ENCODE measurements at regions of chr11 and their contacts with region 1.

Region 1: GRCh38 chr11:60970369-60970774 is 1.1 kb upstream of the CD6 start:
- DNase-seq: peak; percentile 66 to 88 (median 83)
- ATAC-seq: peak; percentile 74
- H3K4me3 ChIP-seq: peak overlapping the region in 1 of 2 experiments; percentile 80
- H3K4me3 Mint-ChIP-seq: peak overlapping the region; percentile 96
- H3K27ac ChIP-seq: peak overlapping the region; percentile 85 to 90
- H3K27ac Mint-ChIP-seq: peak overlapping the region; percentile 97
- H3K4me1 ChIP-seq: peaks cover 16% of the 10 kb centered on the region
- H3K4me1 Mint-ChIP-seq: peaks cover 30% of the 10 kb centered on the region
- H3K27me3 ChIP-seq: no peaks in the 10 kb centered on the region
- H3K27me3 Mint-ChIP-seq: no peaks in the 10 kb centered on the region
- CTCF ChIP-seq: peak; percentile 92

Region 2: GRCh38 chr11:60831143-60831500 is 139.2 kb before region 1 on chr11:
- CTCF ChIA-PET with region 1: interaction called, 3 read pairs
- POLR2A ChIA-PET with region 1: no interaction called
- intact Hi-C with region 1: loop called in 1 of 2 experiments (anchors 1 kb)
- DNase-seq: peak; percentile 60 to 88 (median 83)
- ATAC-seq: peak; percentile 96
- H3K4me3 ChIP-seq: peak overlapping the region in 1 of 2 experiments; percentile 12
- H3K4me3 Mint-ChIP-seq: no peak overlapping the region
- H3K27ac ChIP-seq: no peak overlapping the region
- H3K27ac Mint-ChIP-seq: no peak overlapping the region
- H3K4me1 ChIP-seq: no peaks in the 10 kb centered on the region
- H3K4me1 Mint-ChIP-seq: no peaks in the 10 kb centered on the region
- H3K27me3 ChIP-seq: no peaks in the 10 kb centered on the region
- H3K27me3 Mint-ChIP-seq: peaks cover 6% of the 10 kb centered on the region
- CTCF ChIP-seq: peak; percentile 90

Region 3: DNA sequence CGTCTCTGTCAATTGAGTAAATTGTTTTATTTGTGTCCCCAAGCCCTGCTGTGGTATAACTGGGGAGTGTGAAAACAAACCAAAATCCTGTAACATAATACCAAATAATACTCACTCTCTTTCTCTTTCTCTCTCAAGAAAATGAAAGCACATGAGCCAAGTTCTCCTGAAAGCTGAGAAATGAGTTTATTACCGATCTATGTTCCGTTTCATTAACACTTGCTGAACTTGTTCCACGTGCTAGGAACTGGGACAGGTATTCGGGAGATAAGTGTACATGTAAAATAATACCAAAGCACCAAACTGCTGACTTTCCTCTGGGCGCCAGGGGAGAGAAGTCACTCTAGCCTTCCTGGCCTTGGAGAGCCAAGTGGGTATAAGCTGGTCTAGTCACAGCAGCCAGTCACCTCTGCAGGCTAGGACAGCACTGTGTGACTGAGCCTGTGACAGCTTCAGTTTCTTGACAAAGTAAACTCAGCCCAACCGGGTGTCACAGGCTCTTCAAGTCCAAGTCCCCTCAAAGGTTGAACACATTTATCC is 24.2 kb after region 1 on chr11:
- CTCF ChIA-PET with region 1: interaction called, 13 read pairs
- POLR2A ChIA-PET with region 1: interaction called, 4 read pairs
- intact Hi-C with region 1: no loop called
- DNase-seq: peak in 1 of 9 experiments; percentile 46
- ATAC-seq: peak; percentile 50
- H3K4me3 ChIP-seq: no peak overlapping the region
- H3K4me3 Mint-ChIP-seq: peak overlapping the region; percentile 42
- H3K27ac ChIP-seq: peak overlapping the region in 1 of 2 experiments; percentile 20
- H3K27ac Mint-ChIP-seq: peak overlapping the region; percentile 78
- H3K4me1 ChIP-seq: peaks cover 53% of the 10 kb centered on the region
- H3K4me1 Mint-ChIP-seq: peaks cover 73% of the 10 kb centered on the region
- H3K27me3 ChIP-seq: no peaks in the 10 kb centered on the region
- H3K27me3 Mint-ChIP-seq: no peaks in the 10 kb centered on the region
- CTCF ChIP-seq: no peak

Region 4: GRCh38 chr11:61028272-61028761 is 57.9 kb after region 1 on chr11:
- CTCF ChIA-PET with region 1: interaction called, 14 read pairs
- POLR2A ChIA-PET with region 1: interaction called, 5 read pairs
- intact Hi-C with region 1: loop called in 1 of 2 experiments (anchors 1 kb)
- DNase-seq: peak in 8 of 9 experiments; percentile 29 to 80 (median 72)
- ATAC-seq: peak; percentile 19
- H3K4me3 ChIP-seq: peak overlapping the region; percentile 21 to 38
- H3K4me3 Mint-ChIP-seq: peak overlapping the region; percentile 83
- H3K27ac ChIP-seq: peak overlapping the region; percentile 44 to 66
- H3K27ac Mint-ChIP-seq: peak overlapping the region; percentile 95
- H3K4me1 ChIP-seq: peaks cover 61% of the 10 kb centered on the region
- H3K4me1 Mint-ChIP-seq: peaks cover 66% of the 10 kb centered on the region
- H3K27me3 ChIP-seq: no peaks in the 10 kb centered on the region
- H3K27me3 Mint-ChIP-seq: no peaks in the 10 kb centered on the region
- CTCF ChIP-seq: no peak

Region 5: GRCh38 chr11:61083601-61084147 is 113.3 kb after region 1 on chr11:
- CTCF ChIA-PET with region 1: interaction called, 10 read pairs
- POLR2A ChIA-PET with region 1: interaction called, 4 read pairs
- intact Hi-C with region 1: no loop called
- DNase-seq: peak in 7 of 9 experiments; percentile 38 to 91 (median 75)
- ATAC-seq: peak; percentile 66
- H3K4me3 ChIP-seq: peak overlapping the region in 1 of 2 experiments; percentile 9
- H3K4me3 Mint-ChIP-seq: peak overlapping the region; percentile 70
- H3K27ac ChIP-seq: peak overlapping the region; percentile 60 to 83
- H3K27ac Mint-ChIP-seq: peak overlapping the region; percentile 97
- H3K4me1 ChIP-seq: peaks cover 52% of the 10 kb centered on the region
- H3K4me1 Mint-ChIP-seq: peaks cover 53% of the 10 kb centered on the region
- H3K27me3 ChIP-seq: no peaks in the 10 kb centered on the region
- H3K27me3 Mint-ChIP-seq: no peaks in the 10 kb centered on the region
- CTCF ChIP-seq: no peak

Region 6: GRCh38 chr11:61129639-61130523 is 159.5 kb after region 1 on chr11:
- CTCF ChIA-PET with region 1: interaction called, 12 read pairs
- POLR2A ChIA-PET with region 1: interaction called, 18 read pairs
- intact Hi-C with region 1: loop called (anchors 1 kb)
- DNase-seq: peak; percentile 76 to 95 (median 91)
- ATAC-seq: peak; percentile 91
- H3K4me3 ChIP-seq: no peak overlapping the region
- H3K4me3 Mint-ChIP-seq: peak overlapping the region; percentile 46
- H3K27ac ChIP-seq: no peak overlapping the region
- H3K27ac Mint-ChIP-seq: peak overlapping the region; percentile 64
- H3K4me1 ChIP-seq: peaks cover 17% of the 10 kb centered on the region
- H3K4me1 Mint-ChIP-seq: peaks cover 21% of the 10 kb centered on the region
- H3K27me3 ChIP-seq: no peaks in the 10 kb centered on the region
- H3K27me3 Mint-ChIP-seq: no peaks in the 10 kb centered on the region
- CTCF ChIP-seq: peak; percentile 100

Measured in CD8-positive, alpha-beta T cell (primary cell).